ENCODE measurements at regions of chr15 and their contacts with region 1.

Region 1: DNA sequence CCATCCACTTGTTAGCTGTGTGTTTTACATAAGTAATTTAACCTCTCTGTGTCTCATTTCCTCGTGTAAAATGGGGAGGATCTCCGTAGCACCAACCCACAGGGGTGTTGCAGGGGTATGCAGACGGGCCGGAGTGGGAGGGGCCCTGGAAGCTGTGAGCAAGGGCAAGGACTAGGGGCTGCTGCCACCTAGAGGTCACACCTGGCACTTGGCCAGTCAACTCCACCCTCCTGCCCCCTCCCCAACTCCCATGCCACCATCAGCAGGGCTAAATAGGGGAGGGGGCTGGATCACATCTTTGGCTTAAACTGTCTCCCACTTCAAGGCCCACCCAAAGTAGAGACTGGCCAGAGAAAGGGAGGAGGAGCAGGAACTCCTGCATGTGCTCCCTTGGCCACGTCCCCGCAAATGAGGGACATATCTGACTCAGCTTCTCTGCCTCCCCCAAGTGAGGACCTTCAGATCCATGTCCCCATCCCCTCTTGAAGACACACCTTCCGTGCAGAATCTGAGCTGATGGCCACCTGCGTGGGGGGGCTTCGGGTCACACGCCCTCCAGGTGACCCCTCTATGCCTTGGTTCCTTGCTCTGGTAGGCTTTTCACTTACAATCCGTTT is 2.6 kb downstream of the CCDC9B start:
- DNase-seq: no peak
- ATAC-seq: peak; percentile 94
- H3K4me3 ChIP-seq: no peak overlapping the region
- H3K27ac ChIP-seq: no peak overlapping the region
- H3K4me1 ChIP-seq: peaks cover 9% of the 10 kb centered on the region
- H3K27me3 ChIP-seq: no peaks in the 10 kb centered on the region; a peak in 1 of 4 replicates
- CTCF ChIP-seq: peak; percentile 90 to 95 (median 92)
- EP300 ChIP-seq: no peak
- POLR2A ChIP-seq: no peak
- RAD21 ChIP-seq: peak; percentile 73

Region 2: GRCh38 chr15:39770748-39771689 is 567.1 kb before region 1 on chr15:
- CTCF ChIA-PET with region 1: no interaction called
- POLR2A ChIA-PET with region 1: no interaction called
- RAD21 ChIA-PET with region 1: no interaction called
- SMC1A ChIA-PET with region 1: no interaction called
- in situ Hi-C with region 1: no loop called
- intact Hi-C with region 1: no loop called
- DNase-seq: no peak
- ATAC-seq: peak; percentile 53
- H3K4me3 ChIP-seq: no peak overlapping the region
- H3K27ac ChIP-seq: no peak overlapping the region
- H3K4me1 ChIP-seq: peaks cover 9% of the 10 kb centered on the region
- H3K27me3 ChIP-seq: no peaks in the 10 kb centered on the region
- CTCF ChIP-seq: no peak
- EP300 ChIP-seq: no peak
- POLR2A ChIP-seq: no peak
- RAD21 ChIP-seq: no peak

Region 3: GRCh38 chr15:40163657-40164416 is 174.3 kb before region 1 on chr15:
- CTCF ChIA-PET with region 1: no interaction called
- POLR2A ChIA-PET with region 1: no interaction called
- RAD21 ChIA-PET with region 1: no interaction called
- SMC1A ChIA-PET with region 1: no interaction called
- in situ Hi-C with region 1: no loop called
- intact Hi-C with region 1: no loop called
- DNase-seq: no peak
- ATAC-seq: peak; percentile 27
- H3K4me3 ChIP-seq: peak overlapping the region; percentile 91
- H3K27ac ChIP-seq: peak overlapping the region; percentile 64
- H3K4me1 ChIP-seq: peaks cover 15% of the 10 kb centered on the region; the same call in 1 of the 2 replicates
- H3K27me3 ChIP-seq: no peaks in the 10 kb centered on the region
- CTCF ChIP-seq: no peak
- EP300 ChIP-seq: 0 out of 4 replicates have a peak, but pooled peaks have one; percentile 10 to 35
- POLR2A ChIP-seq: no peak
- RAD21 ChIP-seq: no peak

Region 4: DNA sequence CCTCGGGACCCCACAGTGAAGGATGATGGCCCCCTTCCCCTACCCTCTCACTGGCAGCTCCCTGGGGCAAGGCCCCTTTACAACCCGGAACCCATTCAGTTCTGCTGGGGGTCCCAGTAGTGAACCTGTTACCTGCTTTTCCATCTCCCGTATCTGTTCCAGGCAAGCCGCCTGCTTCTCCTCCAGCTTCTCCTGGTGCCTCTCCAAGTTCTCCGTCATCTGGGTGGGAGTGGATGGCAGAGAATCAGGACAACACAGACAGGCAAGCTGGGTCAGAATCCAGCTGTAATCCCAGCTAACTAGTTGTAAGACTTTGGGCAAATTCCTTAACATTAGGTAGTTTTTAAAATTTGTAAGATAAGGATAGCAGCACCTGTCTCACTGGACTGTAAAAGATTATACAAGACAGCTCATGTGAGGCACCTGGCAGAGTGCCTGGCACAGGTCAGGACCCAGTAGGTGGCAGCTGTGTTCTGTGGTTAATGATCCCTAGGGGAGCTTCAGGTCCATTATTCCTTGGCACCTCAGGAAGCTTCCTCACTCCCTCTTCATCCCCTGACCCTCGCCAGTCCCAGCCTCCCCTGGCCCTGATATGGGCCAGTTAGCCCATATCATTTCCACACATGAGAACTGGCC is 48.9 kb before region 1 on chr15:
- CTCF ChIA-PET with region 1: interaction called, 11 read pairs
- POLR2A ChIA-PET with region 1: no interaction called
- RAD21 ChIA-PET with region 1: interaction called, 3 read pairs
- SMC1A ChIA-PET with region 1: interaction called, 3 read pairs
- in situ Hi-C with region 1: no loop called
- intact Hi-C with region 1: no loop called
- DNase-seq: no peak
- ATAC-seq: no peak
- H3K4me3 ChIP-seq: no peak overlapping the region
- H3K27ac ChIP-seq: no peak overlapping the region
- H3K4me1 ChIP-seq: no peaks in the 10 kb centered on the region
- H3K27me3 ChIP-seq: no peaks in the 10 kb centered on the region; a peak in 2 of 4 replicates
- CTCF ChIP-seq: no peak
- EP300 ChIP-seq: no peak
- POLR2A ChIP-seq: no peak
- RAD21 ChIP-seq: no peak

Region 5: DNA sequence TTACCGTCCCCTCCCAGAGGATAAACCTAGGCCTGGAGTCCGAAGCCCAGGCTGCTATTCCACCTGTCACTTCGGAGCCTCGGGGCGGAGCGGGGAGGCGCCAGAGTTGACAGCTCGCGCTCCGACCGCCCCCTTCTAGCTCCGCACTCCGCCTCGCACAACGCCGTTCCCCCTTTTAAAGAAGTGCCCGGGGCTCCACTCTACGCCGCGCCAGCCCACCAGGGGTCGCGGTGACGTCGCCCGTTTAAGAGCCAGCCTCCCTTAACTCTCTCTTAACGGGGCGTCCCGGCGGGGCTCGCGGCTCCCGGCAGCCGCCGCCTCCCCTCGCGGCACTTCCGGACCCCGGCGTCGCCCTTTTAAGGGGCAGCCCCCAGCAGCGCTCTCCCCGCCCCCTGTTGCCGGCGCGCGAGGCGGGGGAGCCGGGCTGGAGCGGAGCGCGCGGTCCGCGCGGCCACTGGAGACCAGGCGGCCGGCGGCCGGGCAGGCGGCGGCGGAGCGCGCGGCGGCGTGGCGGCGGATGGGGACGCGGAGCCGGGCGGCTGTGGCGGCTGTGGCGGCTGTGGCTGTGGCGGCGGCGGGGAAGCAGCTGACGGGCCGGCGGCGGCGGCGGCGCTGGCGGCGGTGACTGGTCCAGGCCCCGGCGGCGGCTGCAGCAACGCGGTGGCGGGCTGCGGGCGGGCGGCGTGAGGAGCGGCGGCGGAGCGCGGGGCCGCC is 14.8 kb before region 1 on chr15 and contains the start of gene INAFM2:
- CTCF ChIA-PET with region 1: interaction called, 336 read pairs
- POLR2A ChIA-PET with region 1: interaction called, 4 read pairs
- RAD21 ChIA-PET with region 1: interaction called, 30 read pairs
- SMC1A ChIA-PET with region 1: interaction called, 42 read pairs
- in situ Hi-C with region 1: no loop called
- intact Hi-C with region 1: loop called (anchors 1 kb)
- DNase-seq: peak; percentile 48
- ATAC-seq: peak; percentile 92
- H3K4me3 ChIP-seq: peak within 1 kb of the TSS; percentile 72
- H3K27ac ChIP-seq: no peak within 1 kb of the TSS
- H3K4me1 ChIP-seq: peaks cover 5% of the 10 kb centered on the region
- H3K27me3 ChIP-seq: no peaks in the 10 kb centered on the region
- CTCF ChIP-seq: peak; percentile 39 to 40 (median 39); a peak in 5 of 6 replicates
- EP300 ChIP-seq: no peak
- POLR2A ChIP-seq: peak; percentile 41; the same call in 1 of the 2 replicates
- RAD21 ChIP-seq: no peak
- polyA plus RNA-seq, gene INAFM2: 2.0 to 2.4 TPM

Region 6: DNA sequence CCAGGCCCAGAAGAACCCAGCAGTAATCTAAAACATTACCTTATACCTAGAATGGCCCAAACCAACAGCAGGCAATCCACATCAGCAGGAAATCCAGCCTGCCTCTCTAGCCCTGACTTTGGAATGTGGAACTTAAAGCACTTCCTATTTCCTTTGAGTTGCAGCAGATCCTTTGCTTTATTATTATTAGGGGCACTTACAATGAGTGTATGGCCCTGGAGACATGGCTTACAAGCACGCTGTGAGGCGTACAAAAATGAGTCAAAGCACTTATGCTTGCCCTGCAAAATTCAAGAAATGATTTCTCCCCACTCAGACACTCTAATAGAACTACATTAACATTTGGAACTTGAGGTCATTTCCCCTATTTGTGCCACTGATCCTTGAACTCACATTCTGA is 34.8 kb after region 1 on chr15:
- CTCF ChIA-PET with region 1: interaction called, 13 read pairs
- POLR2A ChIA-PET with region 1: no interaction called
- RAD21 ChIA-PET with region 1: no interaction called
- SMC1A ChIA-PET with region 1: no interaction called
- in situ Hi-C with region 1: no loop called
- intact Hi-C with region 1: no loop called
- DNase-seq: no peak
- ATAC-seq: no peak; the same call in 2 of the 3 replicates
- H3K4me3 ChIP-seq: no peak overlapping the region
- H3K27ac ChIP-seq: no peak overlapping the region
- H3K4me1 ChIP-seq: peaks cover 4% of the 10 kb centered on the region
- H3K27me3 ChIP-seq: peaks cover 3 to 5% of the 10 kb centered on the region in 2 experiments; a peak in 3 of 4 replicates
- CTCF ChIP-seq: no peak
- EP300 ChIP-seq: no peak
- POLR2A ChIP-seq: no peak
- RAD21 ChIP-seq: no peak

Region 7: GRCh38 chr15:40421246-40422157 is 83.4 kb after region 1 on chr15:
- CTCF ChIA-PET with region 1: interaction called, 111 read pairs
- POLR2A ChIA-PET with region 1: no interaction called
- RAD21 ChIA-PET with region 1: interaction called, 17 read pairs
- SMC1A ChIA-PET with region 1: interaction called, 3 read pairs
- in situ Hi-C with region 1: no loop called
- intact Hi-C with region 1: no loop called
- DNase-seq: no peak
- ATAC-seq: peak; percentile 99
- H3K4me3 ChIP-seq: no peak overlapping the region
- H3K27ac ChIP-seq: no peak overlapping the region
- H3K4me1 ChIP-seq: no peaks in the 10 kb centered on the region
- H3K27me3 ChIP-seq: no peaks in the 10 kb centered on the region
- CTCF ChIP-seq: peak; percentile 93 to 98 (median 97)
- EP300 ChIP-seq: no peak
- POLR2A ChIP-seq: peak; percentile 73
- RAD21 ChIP-seq: peak; percentile 95

Measured in GM12878 (cell line).